CD4-positive, alpha-beta memory T cell (primary cell): ENCODE measurements at regions of chr20 and their contacts with region 1.

Region 1: DNA sequence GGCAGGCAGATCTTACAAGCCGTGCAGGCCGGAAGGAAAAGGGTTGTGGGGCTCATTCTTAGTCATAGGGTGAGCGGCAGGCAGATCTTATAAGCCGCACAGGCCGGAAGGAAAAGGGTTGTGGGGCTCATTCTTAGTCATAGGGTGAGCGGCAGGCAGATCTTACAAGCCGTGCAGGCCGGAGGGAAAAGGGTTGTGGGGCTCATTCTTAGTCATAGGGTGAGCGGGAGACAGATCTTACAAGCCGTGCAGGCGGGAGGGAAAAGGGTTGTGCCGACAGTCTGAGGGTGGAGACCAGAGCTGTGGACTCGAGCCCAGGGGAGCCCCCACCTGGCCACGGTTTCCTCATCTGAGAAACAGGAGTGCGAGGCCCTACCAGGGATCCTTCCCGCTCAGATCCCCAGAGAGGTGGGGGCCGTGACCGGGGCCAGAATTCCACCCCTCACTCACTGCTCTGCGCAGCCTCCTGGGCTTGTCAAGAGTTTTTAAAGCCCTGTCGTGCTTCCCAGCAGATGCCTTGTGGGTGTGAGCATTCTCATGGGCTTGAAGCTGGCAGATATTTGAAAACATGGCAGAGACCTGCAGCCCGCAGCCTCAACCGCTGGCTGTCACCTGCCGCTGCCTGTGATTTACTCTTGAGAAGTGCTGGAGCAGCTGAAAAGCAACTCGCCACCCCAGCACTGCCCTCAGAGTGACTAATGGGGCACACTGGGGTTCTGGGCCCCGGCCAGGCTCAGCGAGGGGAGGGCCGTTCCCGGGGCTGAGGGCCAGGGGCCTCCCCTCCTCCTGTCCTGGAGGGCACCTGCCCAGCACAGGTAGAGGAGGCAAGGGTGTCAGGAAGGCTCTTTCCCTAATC is 31.9 kb downstream of the NTSR1 start:
- DNase-seq: peak; percentile 80 to 96 (median 85)
- H3K4me3 ChIP-seq: peak overlapping the region in 1 of 2 donors; percentile 63
- H3K4me3 Mint-ChIP-seq: peak overlapping the region; percentile 80 to 91 (median 88)
- H3K27ac ChIP-seq: peak overlapping the region; percentile 69
- H3K27ac Mint-ChIP-seq: peak overlapping the region; percentile 82 to 98 (median 93)
- H3K4me1 ChIP-seq: peaks cover 56% of the 10 kb centered on the region
- H3K4me1 Mint-ChIP-seq: peaks cover 20 to 58% (median 40%) of the 10 kb centered on the region in 4 donors
- H3K27me3 ChIP-seq: no peaks in the 10 kb centered on the region
- H3K27me3 Mint-ChIP-seq: peaks cover 0 to 4% of the 10 kb centered on the region in 2 donors

Region 2: GRCh38 chr20:62454904-62455636 is 285.4 kb before region 1 on chr20:
- CTCF ChIA-PET with region 1: no interaction called
- POLR2A ChIA-PET with region 1: no interaction called
- intact Hi-C with region 1: no loop called
- DNase-seq: no peak
- H3K4me3 ChIP-seq: no peak overlapping the region
- H3K4me3 Mint-ChIP-seq: no peak overlapping the region
- H3K27ac ChIP-seq: no peak overlapping the region
- H3K27ac Mint-ChIP-seq: no peak overlapping the region
- H3K4me1 ChIP-seq: no peaks in the 10 kb centered on the region
- H3K4me1 Mint-ChIP-seq: peaks cover 0 to 3% (median 0%) of the 10 kb centered on the region in 4 donors
- H3K27me3 ChIP-seq: no peaks in the 10 kb centered on the region
- H3K27me3 Mint-ChIP-seq: peaks cover 3 to 6% of the 10 kb centered on the region in 2 donors

Region 3: DNA sequence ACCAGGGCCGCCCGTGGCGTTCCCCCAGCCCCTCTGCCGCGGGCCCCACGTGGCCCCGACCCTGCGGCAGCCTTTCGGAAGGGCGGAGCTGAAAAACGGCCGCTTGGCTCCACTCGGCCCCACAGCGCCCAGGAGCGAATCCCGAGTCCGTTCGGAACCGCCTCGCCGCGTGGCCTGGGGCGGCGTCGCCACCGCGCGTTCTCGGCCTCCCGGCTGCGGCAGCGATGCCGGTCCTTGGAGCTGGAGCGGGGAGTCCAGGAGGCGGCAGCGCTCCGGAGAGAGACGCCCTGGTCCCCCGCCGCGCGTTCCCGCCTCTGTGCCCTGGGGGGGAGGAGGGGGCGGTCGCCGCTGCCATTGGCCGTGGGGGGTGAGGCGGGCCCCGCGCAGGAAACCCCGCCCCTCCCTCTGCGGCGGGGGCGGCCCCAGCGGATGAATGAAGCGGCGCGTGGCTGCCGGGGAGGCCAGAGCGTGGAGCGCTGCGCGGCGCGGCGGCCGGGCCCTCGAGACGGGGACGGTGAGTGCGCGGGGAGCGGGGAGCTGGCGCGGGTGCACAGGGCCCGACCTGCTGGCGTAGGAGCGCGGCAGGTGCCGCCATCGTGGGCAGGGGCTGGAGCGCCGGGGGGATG is 98.4 kb before region 1 on chr20 and contains the start of gene SLCO4A1:
- CTCF ChIA-PET with region 1: no interaction called
- POLR2A ChIA-PET with region 1: interaction called, 9 read pairs
- intact Hi-C with region 1: loop called (anchors 1 kb)
- DNase-seq: peak; percentile 81 to 86 (median 83)
- H3K4me3 ChIP-seq: peak within 1 kb of the TSS; percentile 29 to 62
- H3K4me3 Mint-ChIP-seq: peak within 1 kb of the TSS; percentile 71 to 84 (median 78)
- H3K27ac ChIP-seq: peak within 1 kb of the TSS; percentile 22
- H3K27ac Mint-ChIP-seq: peak within 1 kb of the TSS in 6 of 7 donors; percentile 52 to 91 (median 60)
- H3K4me1 ChIP-seq: peaks cover 25% of the 10 kb centered on the region
- H3K4me1 Mint-ChIP-seq: peaks cover 0 to 14% (median 8%) of the 10 kb centered on the region in 4 donors
- H3K27me3 ChIP-seq: no peaks in the 10 kb centered on the region
- H3K27me3 Mint-ChIP-seq: peaks cover 0 to 4% of the 10 kb centered on the region in 2 donors
- total RNA-seq, gene SLCO4A1: 0.97 to 0.99 TPM

Region 4: DNA sequence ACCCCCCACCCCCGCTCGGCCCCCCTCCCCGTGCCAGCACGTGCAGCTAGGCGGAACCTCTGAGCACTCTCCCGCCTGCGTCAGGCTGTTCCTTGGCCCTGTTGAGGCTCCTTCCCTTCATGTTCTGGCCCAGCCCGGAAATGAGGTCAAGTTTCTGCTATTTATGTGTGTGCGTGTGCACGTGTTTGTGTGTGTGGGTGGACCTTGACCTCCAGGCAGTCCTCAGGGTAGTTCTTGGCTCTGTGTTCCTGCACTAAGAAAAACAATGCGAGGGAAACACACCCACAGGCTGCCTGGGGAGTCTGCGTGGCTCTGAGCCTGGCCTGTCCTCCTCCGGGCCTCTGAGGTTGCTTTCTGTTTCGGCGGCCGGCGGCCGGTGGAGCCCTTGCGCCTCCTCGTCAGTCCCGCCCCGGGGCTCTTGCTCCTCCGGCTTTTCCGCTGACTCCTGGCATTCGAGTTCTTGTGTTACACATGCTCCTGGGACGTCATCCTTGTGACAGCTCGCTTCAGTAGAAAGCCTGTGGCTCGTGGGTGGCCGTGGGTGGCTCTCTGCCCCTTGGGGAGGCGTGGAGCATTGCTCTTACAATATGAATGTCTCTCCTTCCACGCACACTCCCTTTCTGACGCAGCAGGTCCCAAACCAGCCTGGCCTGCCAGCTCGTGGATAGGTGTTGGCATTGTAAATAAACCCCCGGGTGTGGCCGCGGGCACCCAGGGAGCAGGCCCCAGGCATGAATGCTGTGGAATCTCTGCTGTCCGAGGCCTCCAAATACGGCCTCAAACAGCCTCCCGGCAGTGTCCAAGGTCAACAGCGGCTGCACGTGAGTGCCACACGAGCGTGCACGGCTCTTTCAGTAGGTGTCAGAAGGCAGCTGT is 88.2 kb before region 1 on chr20:
- CTCF ChIA-PET with region 1: no interaction called
- POLR2A ChIA-PET with region 1: interaction called, 18 read pairs
- intact Hi-C with region 1: no loop called
- DNase-seq: peak; percentile 70 to 84 (median 78)
- H3K4me3 ChIP-seq: peak overlapping the region; percentile 30 to 55
- H3K4me3 Mint-ChIP-seq: peak overlapping the region; percentile 77 to 93 (median 88)
- H3K27ac ChIP-seq: peak overlapping the region; percentile 71
- H3K27ac Mint-ChIP-seq: peak overlapping the region; percentile 94 to 98 (median 98)
- H3K4me1 ChIP-seq: peaks cover 38% of the 10 kb centered on the region
- H3K4me1 Mint-ChIP-seq: peaks cover 15 to 32% (median 25%) of the 10 kb centered on the region in 4 donors
- H3K27me3 ChIP-seq: no peaks in the 10 kb centered on the region
- H3K27me3 Mint-ChIP-seq: no peaks in the 10 kb centered on the region

Region 5: GRCh38 chr20:62716198-62716940 is 24.1 kb before region 1 on chr20:
- CTCF ChIA-PET with region 1: no interaction called
- POLR2A ChIA-PET with region 1: interaction called, 15 read pairs
- intact Hi-C with region 1: loop called (anchors 1 kb)
- DNase-seq: peak; percentile 17 to 69 (median 44)
- H3K4me3 ChIP-seq: no peak overlapping the region
- H3K4me3 Mint-ChIP-seq: peak overlapping the region; percentile 2 to 87 (median 71)
- H3K27ac ChIP-seq: no peak overlapping the region
- H3K27ac Mint-ChIP-seq: peak overlapping the region; percentile 52 to 93 (median 88)
- H3K4me1 ChIP-seq: peaks cover 21% of the 10 kb centered on the region
- H3K4me1 Mint-ChIP-seq: peaks cover 12 to 41% (median 26%) of the 10 kb centered on the region in 4 donors
- H3K27me3 ChIP-seq: no peaks in the 10 kb centered on the region
- H3K27me3 Mint-ChIP-seq: peaks cover 0 to 2% of the 10 kb centered on the region in 2 donors

Region 6: GRCh38 chr20:62723351-62723750 is 17.2 kb before region 1 on chr20:
- CTCF ChIA-PET with region 1: no interaction called
- POLR2A ChIA-PET with region 1: interaction called, 18 read pairs
- intact Hi-C with region 1: no loop called
- DNase-seq: no peak
- H3K4me3 ChIP-seq: no peak overlapping the region
- H3K4me3 Mint-ChIP-seq: no peak overlapping the region
- H3K27ac ChIP-seq: no peak overlapping the region
- H3K27ac Mint-ChIP-seq: no peak overlapping the region
- H3K4me1 ChIP-seq: peaks cover 6% of the 10 kb centered on the region
- H3K4me1 Mint-ChIP-seq: peaks cover 5 to 22% (median 9%) of the 10 kb centered on the region in 4 donors
- H3K27me3 ChIP-seq: no peaks in the 10 kb centered on the region
- H3K27me3 Mint-ChIP-seq: no peaks in the 10 kb centered on the region

Region 7: DNA sequence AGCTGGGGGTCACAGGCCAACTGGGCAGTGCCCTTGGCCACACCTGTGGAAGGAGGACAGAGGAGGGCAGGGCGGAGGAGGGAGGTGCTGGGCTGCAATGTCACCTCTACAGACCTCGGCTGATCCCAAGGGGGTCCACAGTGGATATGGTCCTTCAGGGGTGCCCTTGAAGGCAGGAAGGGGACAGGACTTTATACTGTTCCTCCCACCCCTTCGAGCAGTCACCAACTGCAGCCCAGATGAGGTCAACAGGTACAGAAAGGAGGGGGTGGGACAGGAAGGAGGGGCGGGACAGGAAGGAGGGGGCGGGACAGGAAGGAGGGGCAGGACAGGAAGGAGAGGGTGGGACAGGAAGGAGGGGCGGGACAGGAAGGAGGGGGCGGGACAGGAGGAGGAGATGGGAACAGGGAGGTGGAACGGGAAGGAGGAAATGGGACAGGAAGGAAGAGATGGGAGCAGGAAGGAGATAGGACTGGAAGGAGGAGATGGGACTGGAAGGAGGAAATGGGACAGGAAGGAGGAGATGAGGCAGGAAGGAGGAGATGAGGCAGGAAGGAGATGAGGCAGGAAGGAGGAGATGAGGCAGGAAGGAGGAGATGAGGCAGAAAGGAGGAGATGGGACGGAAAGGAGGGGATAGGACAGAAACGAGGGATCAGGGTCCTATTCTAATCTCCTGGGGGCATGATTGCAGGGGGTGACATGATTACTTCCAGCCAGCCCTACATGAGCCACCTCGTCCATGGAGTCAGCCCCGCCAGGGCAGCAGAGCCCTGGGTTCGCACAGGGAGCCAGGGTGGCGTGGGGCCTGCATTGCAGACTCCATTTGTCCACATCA is 36.4 kb after region 1 on chr20:
- CTCF ChIA-PET with region 1: no interaction called
- POLR2A ChIA-PET with region 1: interaction called, 17 read pairs
- intact Hi-C with region 1: loop called (anchors 1 kb)
- DNase-seq: peak; percentile 26 to 68 (median 57)
- H3K4me3 ChIP-seq: peak overlapping the region; percentile 33 to 36
- H3K4me3 Mint-ChIP-seq: peak overlapping the region in 7 of 8 donors; percentile 59 to 84 (median 72)
- H3K27ac ChIP-seq: peak overlapping the region; percentile 55
- H3K27ac Mint-ChIP-seq: peak overlapping the region; percentile 81 to 96 (median 93)
- H3K4me1 ChIP-seq: peaks cover 38% of the 10 kb centered on the region
- H3K4me1 Mint-ChIP-seq: peaks cover 15 to 68% (median 43%) of the 10 kb centered on the region in 4 donors
- H3K27me3 ChIP-seq: no peaks in the 10 kb centered on the region
- H3K27me3 Mint-ChIP-seq: no peaks in the 10 kb centered on the region

Region 8: GRCh38 chr20:62808211-62808865 is 67.8 kb after region 1 on chr20:
- CTCF ChIA-PET with region 1: no interaction called
- POLR2A ChIA-PET with region 1: interaction called, 16 read pairs
- intact Hi-C with region 1: no loop called
- DNase-seq: peak; percentile 67 to 77 (median 68)
- H3K4me3 ChIP-seq: no peak overlapping the region
- H3K4me3 Mint-ChIP-seq: peak overlapping the region in 6 of 8 donors; percentile 36 to 86 (median 56)
- H3K27ac ChIP-seq: no peak overlapping the region
- H3K27ac Mint-ChIP-seq: peak overlapping the region in 6 of 7 donors; percentile 41 to 84 (median 78)
- H3K4me1 ChIP-seq: peaks cover 38% of the 10 kb centered on the region
- H3K4me1 Mint-ChIP-seq: peaks cover 8 to 41% (median 22%) of the 10 kb centered on the region in 4 donors
- H3K27me3 ChIP-seq: no peaks in the 10 kb centered on the region
- H3K27me3 Mint-ChIP-seq: peaks cover 0 to 1% of the 10 kb centered on the region in 2 donors

Region 9: GRCh38 chr20:62832212-62832922 is 91.9 kb after region 1 on chr20:
- CTCF ChIA-PET with region 1: no interaction called
- POLR2A ChIA-PET with region 1: no interaction called
- intact Hi-C with region 1: no loop called
- DNase-seq: no peak
- H3K4me3 ChIP-seq: no peak overlapping the region
- H3K4me3 Mint-ChIP-seq: peak overlapping the region in 2 of 8 donors; percentile 15 to 21
- H3K27ac ChIP-seq: no peak overlapping the region
- H3K27ac Mint-ChIP-seq: no peak overlapping the region
- H3K4me1 ChIP-seq: peaks cover 11% of the 10 kb centered on the region
- H3K4me1 Mint-ChIP-seq: peaks cover 0 to 5% (median 1%) of the 10 kb centered on the region in 4 donors
- H3K27me3 ChIP-seq: no peaks in the 10 kb centered on the region
- H3K27me3 Mint-ChIP-seq: peaks cover 4 to 5% of the 10 kb centered on the region in 2 donors